Head of caudate nucleus (tissue), 42 donors: ENCODE measurements at regions of chr5 and their contacts with region 1.

Region 1: GRCh38 chr5:143403593-143404415 is at the start of gene NR3C1:
- DNase-seq: peak; percentile 49 to 94 (median 87)

Region 2: GRCh38 chr5:143002459-143003328 is 401.1 kb before region 1 on chr5:
- intact Hi-C with region 1: loop called (anchors 10 kb)
- DNase-seq: peak in 6 of 42 donors; percentile 15 to 44 (median 30)

Region 3: DNA sequence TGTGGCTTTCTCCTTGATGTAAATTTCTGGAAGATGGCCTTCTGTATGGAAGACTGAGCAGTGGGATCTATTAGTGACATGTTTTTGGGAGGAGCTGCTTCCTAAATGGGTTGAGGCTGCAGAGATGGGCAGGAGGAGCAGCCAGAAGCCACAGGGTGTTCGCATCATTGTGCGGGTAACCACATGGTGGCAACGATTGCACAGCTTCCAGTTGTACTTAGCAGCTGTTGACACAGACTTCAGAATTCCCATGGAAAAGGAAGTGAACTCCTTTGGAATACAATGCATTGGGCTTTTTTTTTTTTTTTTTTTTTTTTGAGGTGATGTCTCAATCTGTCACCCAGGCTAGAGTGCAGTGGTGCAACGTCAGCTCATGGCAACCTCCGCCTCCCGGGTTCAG is 297.6 kb before region 1 on chr5:
- intact Hi-C with region 1: loop called (anchors 5 kb)
- DNase-seq: peak in 33 of 42 donors; percentile 10 to 74 (median 45)

Region 4: GRCh38 chr5:143824851-143825720 is 421.3 kb after region 1 on chr5:
- intact Hi-C with region 1: loop called (anchors 10 kb)
- DNase-seq: peak; percentile 65 to 94 (median 85)